ENCODE measurements at regions of chr2 and their contacts with region 1.

Region 1: GRCh38 chr2:232611551-232612218 is 21.7 kb upstream of the EFHD1 start:
- DNase-seq: no peak
- H3K4me3 ChIP-seq: no peak overlapping the region
- H3K27ac ChIP-seq: no peak overlapping the region
- H3K4me1 ChIP-seq: no peaks in the 10 kb centered on the region
- H3K27me3 ChIP-seq: no peaks in the 10 kb centered on the region
- CTCF ChIP-seq: peak; percentile 24 to 79 (median 58)
- EP300 ChIP-seq: no peak
- POLR2A ChIP-seq: no peak

Region 2: GRCh38 chr2:233053928-233054784 is 442.5 kb after region 1 on chr2:
- intact Hi-C with region 1: loop called (anchors 5 kb)
- DNase-seq: peak; percentile 68
- H3K4me3 ChIP-seq: no peak overlapping the region
- H3K27ac ChIP-seq: no peak overlapping the region
- H3K4me1 ChIP-seq: peaks cover 0 to 5% (median 0%) of the 10 kb centered on the region in 4 donors
- H3K27me3 ChIP-seq: peaks cover 0 to 27% (median 6%) of the 10 kb centered on the region in 3 donors
- CTCF ChIP-seq: peak in 3 of 4 experiments; percentile 62 to 66 (median 63)
- EP300 ChIP-seq: no peak
- POLR2A ChIP-seq: no peak